ENCODE measurements at regions of chr17 and their contacts with region 1.

Region 1: DNA sequence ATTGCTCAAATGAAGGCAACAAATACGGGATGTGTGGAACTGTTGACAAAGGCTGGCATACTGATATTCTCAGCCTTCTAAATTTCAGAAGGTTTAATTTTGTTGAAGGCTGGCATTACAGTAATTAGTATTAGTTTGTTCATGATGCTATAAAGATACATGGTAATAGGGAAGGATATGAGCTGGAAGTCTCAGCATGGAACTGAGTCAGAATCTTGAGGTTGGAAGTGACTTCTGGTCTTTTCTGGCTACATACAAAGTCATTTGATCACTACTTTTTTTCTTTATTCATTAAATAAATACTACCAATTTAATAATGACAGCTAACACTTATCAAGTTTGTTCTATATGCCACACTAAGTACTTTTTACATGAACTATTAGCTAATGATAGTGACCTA is 22.6 kb downstream of the RABEP1 start:
- DNase-seq: no peak
- H3K4me3 ChIP-seq: no peak overlapping the region
- H3K27ac ChIP-seq: no peak overlapping the region
- H3K27me3 ChIP-seq: no peaks in the 10 kb centered on the region
- CTCF ChIP-seq: no peak

Region 2: DNA sequence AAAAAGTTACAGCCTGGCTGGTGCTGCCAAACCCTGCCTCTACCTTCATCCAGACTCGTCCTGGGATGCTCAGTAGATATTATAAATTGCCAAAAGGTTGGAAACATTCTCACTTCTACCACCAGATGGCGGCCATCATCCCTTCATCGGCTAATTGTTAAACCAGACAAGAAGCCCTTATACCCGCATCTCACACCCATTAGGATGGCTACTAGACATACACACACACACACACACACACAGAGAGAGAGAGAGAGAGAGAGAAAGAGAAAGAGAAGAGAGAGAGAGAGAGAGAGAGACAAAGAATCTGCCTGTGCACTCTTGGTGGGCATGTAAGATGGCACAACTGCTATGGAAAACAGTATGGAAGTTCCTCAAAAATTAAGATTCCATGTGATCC is 55.0 kb before region 1 on chr17:
- CTCF ChIA-PET with region 1: interaction called, 11 read pairs
- POLR2A ChIA-PET with region 1: no interaction called
- DNase-seq: peak; percentile 38
- H3K4me3 ChIP-seq: no peak overlapping the region
- H3K27ac ChIP-seq: no peak overlapping the region
- H3K27me3 ChIP-seq: peaks cover 2% of the 10 kb centered on the region
- CTCF ChIP-seq: peak; percentile 72

Measured in AG04450 (cell line).